ENCODE measurements at regions of chrX and their contacts with region 1.

Region 1: DNA sequence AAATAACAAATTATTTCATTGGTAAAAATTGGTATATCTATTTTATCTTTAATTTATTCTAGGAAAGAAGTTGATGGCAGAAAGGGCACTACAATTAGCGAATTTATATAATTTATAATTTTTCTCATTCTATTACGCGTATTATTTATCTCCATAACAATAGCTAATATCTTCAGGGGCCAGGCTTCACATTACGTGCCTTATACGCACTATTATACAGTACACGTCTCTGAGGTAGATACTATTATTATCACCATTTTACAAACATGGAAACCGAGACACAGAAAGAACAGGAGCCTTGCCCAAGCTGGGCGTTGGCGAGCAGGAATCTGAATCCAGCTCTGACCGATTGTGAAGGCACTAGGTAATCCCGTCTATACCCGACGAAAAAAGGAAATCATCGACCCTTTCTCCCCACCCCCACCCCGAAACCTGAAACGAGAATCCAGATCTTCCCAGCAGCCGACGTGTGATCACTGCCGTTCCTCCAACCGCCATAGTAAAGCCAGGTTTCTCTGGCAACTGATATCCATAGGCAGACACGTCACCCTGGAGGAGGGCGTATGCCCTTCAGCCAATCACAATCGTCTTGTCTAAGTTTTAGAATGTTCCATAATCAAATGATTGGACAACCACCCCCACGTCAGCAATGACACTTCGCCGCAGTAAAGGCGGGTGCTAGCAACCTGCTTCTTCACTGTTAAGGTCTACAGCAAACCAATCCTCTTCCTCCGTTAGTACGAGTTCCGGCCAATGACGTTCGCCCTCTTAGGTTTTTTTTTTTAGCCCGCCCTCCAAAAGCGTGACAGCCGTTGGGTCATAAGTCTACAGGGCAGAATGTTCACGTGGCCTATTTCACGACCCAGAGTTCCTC is at the start of gene MORF4L2:
- DNase-seq: peak; percentile 96
- total RNA-seq, gene MORF4L2: 404 to 531 TPM

Region 2: GRCh38 chrX:103538734-103539141 is 147.7 kb before region 1 on chrX:
- intact Hi-C with region 1: loop called in 1 of 2 experiments (anchors 5 kb)
- DNase-seq: no peak

Region 3: GRCh38 chrX:103629318-103630170 is 56.9 kb before region 1 on chrX:
- intact Hi-C with region 1: loop called in 1 of 2 experiments (anchors 5 kb)
- DNase-seq: peak; percentile 88

Region 4: GRCh38 chrX:103716962-103717361 is 30.5 kb after region 1 on chrX:
- intact Hi-C with region 1: no loop called
- DNase-seq: no peak

Region 5: GRCh38 chrX:103941201-103941975 is 255.0 kb after region 1 on chrX:
- intact Hi-C with region 1: no loop called
- DNase-seq: no peak